ENCODE measurements at regions of chr1 and their contacts with region 1.

Region 1: GRCh38 chr1:23634842-23635651 is 56.6 kb upstream of the RPL11 start:
- DNase-seq: peak in 1 of 2 experiments; percentile 71
- H3K4me3 ChIP-seq: no peak overlapping the region
- H3K27ac ChIP-seq: no peak overlapping the region
- H3K4me1 ChIP-seq: peaks cover 0 to 17% (median under 1%) of the 10 kb centered on the region in 4 experiments; a peak in 5 of 7 replicates
- H3K27me3 ChIP-seq: no peaks in the 10 kb centered on the region
- CTCF ChIP-seq: peak; percentile 60 to 97 (median 74)
- EP300 ChIP-seq: no peak
- POLR2A ChIP-seq: no peak
- RAD21 ChIP-seq: peak; percentile 74 to 85

Region 2: DNA sequence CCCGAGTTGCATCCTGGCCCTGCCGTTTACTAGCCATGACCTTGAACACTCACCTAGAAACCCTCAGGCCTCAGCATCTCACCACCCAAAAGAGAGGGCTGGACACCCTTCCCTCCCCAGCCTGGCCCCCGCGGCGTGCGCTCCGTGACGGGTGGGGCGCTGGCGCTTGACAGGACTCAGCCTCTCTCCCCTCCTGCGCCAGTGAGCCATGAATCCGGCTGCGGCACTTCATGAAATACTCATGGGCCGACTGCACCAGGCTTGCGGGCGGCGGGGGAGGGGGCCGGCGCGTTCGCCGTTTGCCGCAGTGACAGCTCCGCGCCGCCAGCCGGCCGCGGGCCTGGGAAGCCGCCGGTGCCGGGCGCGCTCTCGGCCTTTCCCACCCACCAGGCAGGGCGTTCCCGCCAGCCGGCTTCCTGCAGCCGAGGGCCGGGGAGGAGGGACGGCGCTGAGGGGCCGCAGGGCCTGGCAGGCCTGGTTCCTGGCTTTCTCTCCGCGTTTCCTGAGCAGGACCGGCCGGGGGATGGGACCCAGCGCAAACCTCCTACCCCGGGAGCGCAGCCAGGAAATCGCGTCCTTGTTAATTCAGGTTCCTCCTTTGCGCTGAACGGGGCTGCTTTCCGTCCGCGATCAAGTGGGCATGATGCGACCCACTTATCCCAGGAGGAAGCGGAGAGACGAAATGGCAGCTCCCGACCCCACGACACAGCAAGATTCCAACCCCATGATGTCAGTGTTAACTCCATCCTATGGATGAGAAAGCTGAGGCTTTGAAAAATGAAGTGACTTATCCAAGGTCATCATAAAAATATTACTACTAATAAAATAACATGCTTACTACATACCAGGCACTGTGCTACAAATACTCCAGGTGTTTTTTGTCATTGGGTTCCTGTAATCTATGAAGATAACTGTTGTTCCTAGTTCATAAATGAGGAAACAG is 457.3 kb before region 1 on chr1:
- CTCF ChIA-PET with region 1: no interaction called
- POLR2A ChIA-PET with region 1: no interaction called
- DNase-seq: peak in 1 of 2 experiments; percentile 85
- H3K4me3 ChIP-seq: peak overlapping the region; percentile 36 to 66 (median 56)
- H3K27ac ChIP-seq: no peak overlapping the region
- H3K4me1 ChIP-seq: peaks cover 0 to 3% (median 0%) of the 10 kb centered on the region in 4 experiments; a peak in 3 of 7 replicates
- H3K27me3 ChIP-seq: peaks cover 2 to 28% (median 16%) of the 10 kb centered on the region in 4 experiments
- CTCF ChIP-seq: peak in 2 of 3 experiments; percentile 5 to 10; a peak in 1 of 4 replicates
- EP300 ChIP-seq: no peak
- POLR2A ChIP-seq: no peak
- RAD21 ChIP-seq: peak in 1 of 2 experiments; percentile 17; a peak in 1 of 4 replicates

Region 3: DNA sequence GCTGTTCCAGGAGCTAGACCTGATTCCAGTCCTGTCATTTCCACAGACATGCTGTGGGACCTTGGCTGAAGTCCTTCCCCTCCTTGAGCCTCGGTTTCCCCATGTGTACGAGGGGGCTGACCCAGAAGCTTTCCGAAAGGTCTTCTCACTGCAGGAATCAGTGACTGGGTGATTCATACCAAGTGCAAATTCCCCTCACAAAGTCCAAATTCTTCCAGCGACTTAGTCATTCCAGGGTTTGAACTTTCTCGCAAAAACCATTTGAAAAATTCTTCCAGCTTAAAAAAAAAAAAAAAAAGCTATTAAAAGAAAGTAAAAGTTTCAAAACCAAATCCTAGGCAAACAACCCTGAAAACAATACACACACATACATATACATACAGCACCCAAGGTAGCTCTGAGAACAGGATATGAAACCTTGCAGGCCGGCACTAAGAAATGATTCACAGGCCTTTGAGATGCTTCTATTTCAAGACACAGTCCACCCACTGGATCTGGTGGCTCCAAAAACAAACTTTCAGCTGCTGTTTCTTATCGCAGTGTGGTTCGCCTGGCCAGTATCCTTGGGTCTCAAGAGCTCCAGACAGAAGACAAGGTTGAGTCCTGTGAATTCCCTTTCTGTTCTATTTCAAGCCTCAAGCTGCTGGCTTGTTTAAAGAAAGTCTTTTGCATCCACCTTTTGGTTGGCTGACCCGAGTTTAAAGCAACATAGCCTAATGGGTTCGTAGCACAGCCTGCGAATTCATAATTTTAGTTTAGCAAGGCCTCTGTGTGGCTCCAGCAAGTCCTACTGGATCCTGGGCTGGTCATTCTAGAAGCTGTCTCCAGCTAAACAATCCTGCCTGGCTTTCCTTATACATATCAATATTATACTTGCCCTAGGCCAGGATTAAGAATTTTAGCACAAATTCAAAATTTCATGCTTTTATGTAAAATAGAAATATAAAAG is 57.7 kb before region 1 on chr1:
- CTCF ChIA-PET with region 1: interaction called, 143 read pairs
- POLR2A ChIA-PET with region 1: interaction called, 3 read pairs
- DNase-seq: no peak
- H3K4me3 ChIP-seq: no peak overlapping the region
- H3K27ac ChIP-seq: no peak overlapping the region
- H3K4me1 ChIP-seq: peaks cover 2 to 6% (median 3%) of the 10 kb centered on the region in 4 experiments; a peak in 4 of 7 replicates
- H3K27me3 ChIP-seq: no peaks in the 10 kb centered on the region
- CTCF ChIP-seq: no peak
- EP300 ChIP-seq: no peak
- POLR2A ChIP-seq: no peak
- RAD21 ChIP-seq: no peak

Region 4: GRCh38 chr1:23598424-23598823 is 36.6 kb before region 1 on chr1:
- CTCF ChIA-PET with region 1: interaction called, 89 read pairs
- POLR2A ChIA-PET with region 1: interaction called, 10 read pairs
- DNase-seq: peak; percentile 86
- H3K4me3 ChIP-seq: peak overlapping the region in 1 of 4 experiments; percentile 6; a peak in 3 of 8 replicates
- H3K27ac ChIP-seq: peak overlapping the region; percentile 48; the same call in 1 of the 2 replicates
- H3K4me1 ChIP-seq: peaks cover 16 to 43% (median 18%) of the 10 kb centered on the region in 4 experiments
- H3K27me3 ChIP-seq: no peaks in the 10 kb centered on the region; a peak in 1 of 7 replicates
- CTCF ChIP-seq: peak in 1 of 3 experiments; percentile 13; a peak in 1 of 4 replicates
- EP300 ChIP-seq: peak in 1 of 2 experiments; percentile 92; a peak in 2 of 3 replicates
- POLR2A ChIP-seq: no peak
- RAD21 ChIP-seq: peak in 1 of 2 experiments; percentile 28; a peak in 2 of 4 replicates

Region 5: GRCh38 chr1:23619299-23620188 is 15.5 kb before region 1 on chr1:
- CTCF ChIA-PET with region 1: interaction called, 67 read pairs
- POLR2A ChIA-PET with region 1: interaction called, 10 read pairs
- DNase-seq: peak in 1 of 2 experiments; percentile 72
- H3K4me3 ChIP-seq: peak overlapping the region; percentile 6 to 55 (median 28)
- H3K27ac ChIP-seq: no peak overlapping the region
- H3K4me1 ChIP-seq: peaks cover 4 to 17% (median 9%) of the 10 kb centered on the region in 4 experiments; a peak in 6 of 7 replicates
- H3K27me3 ChIP-seq: peaks cover 0 to 19% (median 13%) of the 10 kb centered on the region in 4 experiments; a peak in 5 of 7 replicates
- CTCF ChIP-seq: no peak
- EP300 ChIP-seq: no peak
- POLR2A ChIP-seq: no peak
- RAD21 ChIP-seq: no peak

Region 6: GRCh38 chr1:23657659-23658275 is 22.7 kb after region 1 on chr1:
- CTCF ChIA-PET with region 1: interaction called, 222 read pairs
- POLR2A ChIA-PET with region 1: interaction called, 5 read pairs
- DNase-seq: peak; percentile 50 to 91
- H3K4me3 ChIP-seq: no peak overlapping the region
- H3K27ac ChIP-seq: no peak overlapping the region
- H3K4me1 ChIP-seq: no peaks in the 10 kb centered on the region
- H3K27me3 ChIP-seq: no peaks in the 10 kb centered on the region
- CTCF ChIP-seq: peak; percentile 81 to 98 (median 90)
- EP300 ChIP-seq: no peak
- POLR2A ChIP-seq: no peak
- RAD21 ChIP-seq: peak; percentile 66 to 76

Region 7: DNA sequence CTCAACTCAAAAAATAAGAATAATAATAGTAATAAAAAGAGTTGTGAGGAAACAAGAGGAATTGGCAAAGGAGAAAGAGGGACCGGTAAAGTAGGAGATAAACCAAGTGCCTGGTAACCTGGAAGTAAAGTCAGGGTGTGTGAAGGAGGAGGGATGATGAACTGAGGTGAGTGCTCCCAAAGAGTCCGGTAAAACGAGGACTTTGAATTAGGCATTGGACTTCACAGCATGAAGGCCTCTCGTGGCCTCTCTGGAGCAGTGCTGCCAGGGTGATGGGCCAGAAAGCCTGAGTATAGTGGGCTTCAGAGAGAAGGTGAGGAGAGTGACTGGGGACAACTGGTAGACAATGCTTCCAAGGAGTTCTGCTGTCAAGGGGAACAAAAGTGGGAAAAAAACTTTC is 74.2 kb after region 1 on chr1:
- CTCF ChIA-PET with region 1: no interaction called
- POLR2A ChIA-PET with region 1: no interaction called
- DNase-seq: no peak
- H3K4me3 ChIP-seq: no peak overlapping the region
- H3K27ac ChIP-seq: no peak overlapping the region
- H3K4me1 ChIP-seq: no peaks in the 10 kb centered on the region
- H3K27me3 ChIP-seq: no peaks in the 10 kb centered on the region
- CTCF ChIP-seq: no peak
- EP300 ChIP-seq: no peak
- POLR2A ChIP-seq: no peak
- RAD21 ChIP-seq: no peak

Measured in H1 (cell line).